ENCODE measurements at regions of chr6 and their contacts with region 1.

Region 1: GRCh38 chr6:168302534-168302933 is 17.0 kb downstream of the DACT2 start:
- DNase-seq: peak; percentile 71
- ATAC-seq: peak; percentile 21
- H3K4me3 ChIP-seq: peak overlapping the region; percentile 48 to 69 (median 62)
- H3K27ac ChIP-seq: peak overlapping the region; percentile 65
- H3K4me1 ChIP-seq: peaks cover 44% of the 10 kb centered on the region
- H3K27me3 ChIP-seq: no peaks in the 10 kb centered on the region
- CTCF ChIP-seq: no peak
- EP300 ChIP-seq: no peak
- POLR2A ChIP-seq: no peak
- RAD21 ChIP-seq: no peak

Region 2: DNA sequence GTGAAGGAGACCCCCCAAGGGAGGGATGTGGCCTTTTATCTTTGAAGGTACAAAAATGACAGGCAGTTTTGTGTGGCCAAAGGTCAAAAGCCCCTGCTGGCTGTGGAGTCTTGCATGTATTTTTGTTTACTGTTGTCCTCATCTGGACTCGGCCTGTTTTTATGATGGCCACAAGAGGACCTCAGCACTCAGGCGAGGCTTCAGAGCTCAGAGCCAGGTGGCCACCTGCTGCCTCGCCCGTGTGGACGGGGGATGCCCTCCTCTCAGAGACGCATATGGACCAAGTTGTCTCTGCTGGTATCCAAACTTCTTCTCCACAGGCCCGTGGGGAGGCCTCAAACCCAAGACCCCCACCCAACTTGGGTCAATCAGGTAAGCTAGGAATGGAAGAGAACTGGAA is 101.2 kb before region 1 on chr6:
- CTCF ChIA-PET with region 1: no interaction called
- POLR2A ChIA-PET with region 1: interaction called, 12 read pairs
- in situ Hi-C with region 1: no loop called
- intact Hi-C with region 1: loop called (anchors 1 kb)
- DNase-seq: peak; percentile 63
- ATAC-seq: peak; percentile 85
- H3K4me3 ChIP-seq: peak overlapping the region in 2 of 3 experiments; percentile 25 to 45; a peak in 1 of 6 replicates
- H3K27ac ChIP-seq: peak overlapping the region; percentile 59
- H3K4me1 ChIP-seq: peaks cover 59% of the 10 kb centered on the region
- H3K27me3 ChIP-seq: no peaks in the 10 kb centered on the region
- CTCF ChIP-seq: peak; percentile 91
- EP300 ChIP-seq: no peak
- POLR2A ChIP-seq: no peak
- RAD21 ChIP-seq: peak; percentile 93

Region 3: DNA sequence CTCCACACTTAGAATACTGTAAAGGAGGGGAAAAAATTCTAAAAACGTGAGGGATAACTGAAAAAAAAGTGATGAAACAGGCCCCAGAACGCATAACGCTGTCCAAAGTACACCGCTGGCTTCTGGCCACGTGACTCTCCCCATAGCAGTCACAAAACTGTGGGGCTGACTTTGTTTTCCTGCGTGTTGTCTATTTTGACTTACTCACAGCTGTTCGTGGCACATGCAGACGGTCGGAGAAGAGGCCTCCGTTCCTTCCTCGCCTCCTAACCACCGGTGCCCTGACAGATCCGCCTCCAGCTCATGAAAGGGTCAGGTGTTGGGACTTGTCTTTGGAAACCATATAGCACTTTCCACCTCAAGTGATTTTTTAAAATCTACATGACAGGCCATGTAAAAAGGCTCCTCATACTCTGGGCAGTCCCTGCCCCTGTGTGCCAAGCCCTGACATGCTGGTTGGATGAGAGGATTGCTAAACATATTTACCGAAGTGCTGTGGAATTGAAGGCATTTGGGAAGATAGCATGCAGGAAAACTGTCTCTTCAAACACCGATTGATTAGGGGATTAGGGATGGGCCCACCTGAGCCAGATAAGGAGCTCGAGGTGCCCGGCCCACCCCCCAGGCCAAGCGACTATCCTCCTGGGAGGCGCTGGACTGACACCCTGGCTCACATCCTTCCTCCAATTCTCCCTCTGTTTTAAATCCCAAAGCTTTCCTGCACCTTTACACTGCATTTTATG is 37.8 kb before region 1 on chr6:
- CTCF ChIA-PET with region 1: no interaction called
- POLR2A ChIA-PET with region 1: interaction called, 18 read pairs
- in situ Hi-C with region 1: no loop called
- intact Hi-C with region 1: loop called (anchors 5 kb)
- DNase-seq: peak; percentile 91
- ATAC-seq: peak; percentile 50
- H3K4me3 ChIP-seq: peak overlapping the region; percentile 22 to 65 (median 33)
- H3K27ac ChIP-seq: peak overlapping the region; percentile 79
- H3K4me1 ChIP-seq: peaks cover 86% of the 10 kb centered on the region
- H3K27me3 ChIP-seq: no peaks in the 10 kb centered on the region
- CTCF ChIP-seq: no peak; the same call in 1 of the 2 replicates
- EP300 ChIP-seq: peak in 1 of 2 experiments; percentile 71; a peak in 3 of 4 replicates
- POLR2A ChIP-seq: peak in 1 of 2 experiments; percentile 48; a peak in 2 of 4 replicates
- RAD21 ChIP-seq: peak; percentile 15; the same call in 1 of the 2 replicates

Region 4: GRCh38 chr6:168286116-168286515 is 16.4 kb before region 1 on chr6:
- CTCF ChIA-PET with region 1: no interaction called
- POLR2A ChIA-PET with region 1: interaction called, 14 read pairs
- in situ Hi-C with region 1: no loop called
- intact Hi-C with region 1: no loop called
- DNase-seq: peak; percentile 63
- ATAC-seq: peak; percentile 88
- H3K4me3 ChIP-seq: 0 out of 6 replicates have a peak overlapping the region, but pooled peaks of 1 of the 3 experiments have one; percentile 3
- H3K27ac ChIP-seq: no peak overlapping the region
- H3K4me1 ChIP-seq: peaks cover 49% of the 10 kb centered on the region
- H3K27me3 ChIP-seq: no peaks in the 10 kb centered on the region
- CTCF ChIP-seq: no peak
- EP300 ChIP-seq: no peak
- POLR2A ChIP-seq: no peak
- RAD21 ChIP-seq: no peak

Region 5: GRCh38 chr6:168326294-168327261 is 24.0 kb after region 1 on chr6:
- CTCF ChIA-PET with region 1: no interaction called
- POLR2A ChIA-PET with region 1: interaction called, 42 read pairs
- in situ Hi-C with region 1: no loop called
- intact Hi-C with region 1: loop called (anchors 1 kb)
- DNase-seq: peak; percentile 99
- ATAC-seq: peak; percentile 99
- H3K4me3 ChIP-seq: peak overlapping the region; percentile 22 to 51 (median 30); a peak in 4 of 6 replicates
- H3K27ac ChIP-seq: peak overlapping the region; percentile 94
- H3K4me1 ChIP-seq: peaks cover 74% of the 10 kb centered on the region
- H3K27me3 ChIP-seq: no peaks in the 10 kb centered on the region
- CTCF ChIP-seq: no peak
- EP300 ChIP-seq: peak; percentile 53 to 95; a peak in 2 of 4 replicates
- POLR2A ChIP-seq: peak; percentile 21 to 65; a peak in 2 of 4 replicates
- RAD21 ChIP-seq: peak; percentile 26; the same call in 1 of the 2 replicates

Region 6: DNA sequence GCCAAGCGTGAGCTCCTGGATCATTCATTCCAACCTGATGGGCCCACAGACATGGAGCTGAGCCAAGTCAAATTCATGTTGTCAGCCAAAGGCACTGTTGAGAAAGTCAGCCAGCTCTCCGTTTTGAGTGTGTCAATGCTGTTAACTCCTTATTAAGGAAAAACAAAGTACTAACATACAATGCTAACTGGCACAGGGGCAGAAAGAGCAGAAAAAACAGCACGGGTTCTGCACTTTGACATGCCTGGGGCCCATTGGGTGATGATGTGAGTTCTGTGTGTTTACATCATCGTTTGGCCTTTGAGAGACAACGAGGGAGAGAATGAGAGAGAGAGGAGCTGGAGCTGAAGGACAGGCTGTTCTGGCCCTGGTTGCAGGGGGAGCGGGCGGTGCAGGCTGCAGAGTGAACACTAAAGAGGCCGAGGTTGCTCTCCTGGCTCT is 224.3 kb after region 1 on chr6:
- CTCF ChIA-PET with region 1: no interaction called
- POLR2A ChIA-PET with region 1: no interaction called
- in situ Hi-C with region 1: no loop called
- intact Hi-C with region 1: no loop called
- DNase-seq: no peak
- ATAC-seq: no peak
- H3K4me3 ChIP-seq: no peak overlapping the region
- H3K27ac ChIP-seq: no peak overlapping the region
- H3K4me1 ChIP-seq: no peaks in the 10 kb centered on the region
- H3K27me3 ChIP-seq: peaks cover 4 to 62% of the 10 kb centered on the region in 2 experiments; a peak in 4 of 5 replicates
- CTCF ChIP-seq: no peak
- EP300 ChIP-seq: no peak
- POLR2A ChIP-seq: no peak
- RAD21 ChIP-seq: no peak

Measured in HepG2 (cell line).